ENCODE measurements at regions of chr1 and their contacts with region 1.

Region 1: GRCh38 chr1:42756956-42757891 is 9.6 kb downstream of the P3H1 start:
- DNase-seq: peak; percentile 82
- H3K4me3 ChIP-seq: no peak overlapping the region; a peak in 1 of 4 replicates
- H3K27ac ChIP-seq: peak overlapping the region in 1 of 2 experiments; percentile 0; a peak in 1 of 4 replicates
- H3K4me1 ChIP-seq: no peaks in the 10 kb centered on the region; a peak in 1 of 4 replicates
- H3K27me3 ChIP-seq: no peaks in the 10 kb centered on the region
- CTCF ChIP-seq: peak; percentile 70
- EP300 ChIP-seq: no peak
- RAD21 ChIP-seq: peak; percentile 60

Region 2: DNA sequence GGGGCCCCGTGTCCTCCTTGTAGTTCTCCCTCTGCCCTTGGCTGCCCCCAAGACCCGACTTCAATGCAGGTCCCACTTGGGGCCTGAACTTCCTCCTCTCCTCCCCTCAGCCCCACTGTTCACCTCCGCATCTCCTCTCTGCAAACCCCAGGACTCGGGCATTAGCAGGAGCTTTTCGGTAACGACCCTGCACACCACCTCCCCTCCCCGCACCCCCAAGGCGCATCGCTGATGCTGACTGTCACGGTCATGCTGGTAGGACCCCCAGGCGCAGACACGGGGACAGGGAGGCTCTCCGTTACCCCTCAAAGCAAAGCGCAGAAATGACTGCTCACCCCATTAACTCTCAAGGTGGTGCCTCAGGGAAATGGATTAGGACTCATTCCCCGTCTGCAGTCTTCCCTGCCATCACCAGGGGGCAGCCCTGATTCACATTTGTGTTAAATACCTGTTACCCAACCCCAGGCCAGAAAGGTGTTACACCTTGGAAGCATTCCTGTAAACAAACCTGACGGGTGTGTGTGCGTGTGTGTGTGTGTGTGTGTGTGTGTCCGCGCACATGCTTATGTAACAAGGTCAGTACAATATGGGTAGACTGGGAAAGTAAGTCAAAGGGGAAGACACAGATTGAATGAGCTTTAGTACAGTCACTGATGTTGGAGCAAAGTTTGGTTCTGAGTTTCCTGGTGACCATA is 610.5 kb before region 1 on chr1:
- CTCF ChIA-PET with region 1: interaction called, 17 read pairs
- POLR2A ChIA-PET with region 1: no interaction called
- DNase-seq: peak; percentile 85
- H3K4me3 ChIP-seq: no peak overlapping the region; a peak in 1 of 4 replicates
- H3K27ac ChIP-seq: no peak overlapping the region
- H3K4me1 ChIP-seq: no peaks in the 10 kb centered on the region
- H3K27me3 ChIP-seq: peaks cover 16% of the 10 kb centered on the region
- CTCF ChIP-seq: peak; percentile 85
- EP300 ChIP-seq: no peak
- RAD21 ChIP-seq: peak; percentile 94

Region 3: DNA sequence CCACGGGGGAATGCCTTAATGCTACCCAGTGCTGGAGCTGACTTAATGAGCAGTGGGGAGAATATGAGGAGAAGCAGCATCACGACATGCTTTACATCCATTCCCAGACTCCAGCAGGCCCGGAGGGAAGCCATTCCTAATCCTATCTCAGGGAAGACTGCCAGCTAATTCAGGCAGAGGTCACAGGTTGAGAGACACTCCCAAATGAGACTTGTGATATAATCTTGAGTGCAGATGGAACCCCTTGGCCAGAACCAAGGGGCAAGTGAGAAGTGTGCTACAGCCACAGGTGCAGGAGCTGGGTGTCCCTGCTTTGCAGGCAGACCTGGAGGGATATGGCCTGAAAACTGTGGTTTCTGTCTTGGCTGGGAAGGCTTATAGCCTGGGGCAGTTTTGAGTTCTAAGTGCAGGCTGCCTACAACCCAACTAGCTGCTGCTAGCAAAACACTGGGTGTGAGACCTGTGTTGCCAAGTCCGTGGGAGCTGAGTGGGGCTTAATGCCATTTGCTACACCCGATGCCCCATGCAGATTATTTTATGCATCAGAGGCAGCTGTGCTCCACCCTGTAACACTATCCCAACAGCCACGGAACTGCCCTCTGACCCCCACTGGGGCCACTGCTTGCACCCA is 547.5 kb before region 1 on chr1:
- CTCF ChIA-PET with region 1: no interaction called
- POLR2A ChIA-PET with region 1: no interaction called
- DNase-seq: no peak
- H3K4me3 ChIP-seq: no peak overlapping the region
- H3K27ac ChIP-seq: no peak overlapping the region; a peak in 1 of 4 replicates
- H3K4me1 ChIP-seq: peaks cover 14 to 16% of the 10 kb centered on the region in 2 experiments; a peak in 2 of 4 replicates
- H3K27me3 ChIP-seq: no peaks in the 10 kb centered on the region
- CTCF ChIP-seq: no peak
- EP300 ChIP-seq: no peak
- RAD21 ChIP-seq: no peak

Region 4: DNA sequence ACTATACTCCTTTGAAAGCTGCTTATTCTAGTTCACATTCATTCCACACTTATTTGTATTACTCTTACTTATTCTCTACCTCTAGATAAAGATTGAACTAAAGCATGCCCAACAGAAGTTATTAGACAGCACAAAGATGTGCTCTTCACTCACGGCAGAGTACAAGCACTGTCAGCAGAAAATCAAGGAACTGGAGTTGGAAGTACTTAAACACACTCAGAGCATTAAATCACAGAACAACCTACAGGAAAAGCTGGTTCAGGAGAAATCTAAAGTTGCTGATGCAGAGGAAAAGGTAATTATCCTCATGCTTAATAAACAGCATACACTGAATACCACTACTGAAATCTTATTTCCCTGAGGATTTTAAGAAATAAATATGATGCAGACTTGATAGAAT is 180.3 kb before region 1 on chr1:
- CTCF ChIA-PET with region 1: interaction called, 11 read pairs
- POLR2A ChIA-PET with region 1: no interaction called
- DNase-seq: no peak
- H3K4me3 ChIP-seq: no peak overlapping the region
- H3K27ac ChIP-seq: no peak overlapping the region
- H3K4me1 ChIP-seq: no peaks in the 10 kb centered on the region
- H3K27me3 ChIP-seq: no peaks in the 10 kb centered on the region
- CTCF ChIP-seq: no peak
- EP300 ChIP-seq: no peak
- RAD21 ChIP-seq: no peak

Region 5: GRCh38 chr1:42703888-42704464 is 53.2 kb before region 1 on chr1:
- CTCF ChIA-PET with region 1: no interaction called
- POLR2A ChIA-PET with region 1: no interaction called
- DNase-seq: no peak
- H3K4me3 ChIP-seq: no peak overlapping the region
- H3K27ac ChIP-seq: no peak overlapping the region
- H3K4me1 ChIP-seq: no peaks in the 10 kb centered on the region
- H3K27me3 ChIP-seq: no peaks in the 10 kb centered on the region
- CTCF ChIP-seq: no peak
- EP300 ChIP-seq: no peak
- RAD21 ChIP-seq: no peak

Region 6: GRCh38 chr1:42779725-42780124 is 22.5 kb after region 1 on chr1:
- CTCF ChIA-PET with region 1: no interaction called
- POLR2A ChIA-PET with region 1: no interaction called
- DNase-seq: no peak
- H3K4me3 ChIP-seq: no peak overlapping the region
- H3K27ac ChIP-seq: no peak overlapping the region
- H3K4me1 ChIP-seq: no peaks in the 10 kb centered on the region
- H3K27me3 ChIP-seq: no peaks in the 10 kb centered on the region
- CTCF ChIP-seq: no peak
- EP300 ChIP-seq: no peak
- RAD21 ChIP-seq: no peak